ENCODE measurements at regions of chr12 and their contacts with region 1.

Region 1: GRCh38 chr12:13362260-13362841 is 165.8 kb downstream of the EMP1 start:
- DNase-seq: peak; percentile 82
- H3K4me3 ChIP-seq: no peak overlapping the region
- H3K27ac ChIP-seq: no peak overlapping the region
- H3K4me1 ChIP-seq: peaks cover 0 to 3% (median 0%) of the 10 kb centered on the region in 4 donors
- H3K27me3 ChIP-seq: no peaks in the 10 kb centered on the region
- CTCF ChIP-seq: peak; percentile 69 to 92 (median 84)
- EP300 ChIP-seq: no peak
- POLR2A ChIP-seq: no peak

Region 2: GRCh38 chr12:12845025-12845787 is 517.1 kb before region 1 on chr12:
- in situ Hi-C with region 1: no loop called
- intact Hi-C with region 1: loop called (anchors 5 kb)
- DNase-seq: no peak
- H3K4me3 ChIP-seq: no peak overlapping the region
- H3K27ac ChIP-seq: no peak overlapping the region
- H3K4me1 ChIP-seq: peaks cover 0 to 6% (median 0%) of the 10 kb centered on the region in 4 donors
- H3K27me3 ChIP-seq: no peaks in the 10 kb centered on the region
- CTCF ChIP-seq: no peak
- EP300 ChIP-seq: no peak
- POLR2A ChIP-seq: no peak

Region 3: DNA sequence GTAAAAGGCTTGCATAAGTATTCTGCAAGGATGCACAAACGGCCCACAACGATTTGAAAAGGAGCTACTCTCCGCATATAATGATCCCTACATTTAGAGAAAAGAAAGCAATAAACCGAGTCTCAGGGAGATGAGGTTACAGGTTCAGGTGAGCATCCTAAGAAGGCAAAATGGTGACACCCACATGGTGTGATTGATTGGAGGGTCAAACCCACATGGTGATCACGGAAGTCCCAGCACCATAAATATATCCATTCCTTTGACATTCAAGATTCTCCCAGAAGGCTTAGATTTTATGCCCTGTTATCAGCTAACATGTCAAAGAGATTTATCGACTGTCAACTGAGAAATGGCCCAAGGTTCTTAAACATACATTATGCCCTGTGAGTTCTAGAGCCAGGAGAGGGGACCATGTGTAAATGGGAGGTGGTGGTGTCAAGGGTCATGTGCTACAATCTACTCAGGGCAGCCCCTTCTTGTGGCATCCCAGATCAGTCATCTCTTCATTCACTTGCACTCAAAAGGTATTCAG is 116.4 kb after region 1 on chr12:
- in situ Hi-C with region 1: no loop called
- intact Hi-C with region 1: no loop called
- DNase-seq: no peak
- H3K4me3 ChIP-seq: no peak overlapping the region
- H3K27ac ChIP-seq: no peak overlapping the region
- H3K4me1 ChIP-seq: no peaks in the 10 kb centered on the region
- H3K27me3 ChIP-seq: no peaks in the 10 kb centered on the region
- CTCF ChIP-seq: no peak
- EP300 ChIP-seq: no peak
- POLR2A ChIP-seq: no peak

Region 4: DNA sequence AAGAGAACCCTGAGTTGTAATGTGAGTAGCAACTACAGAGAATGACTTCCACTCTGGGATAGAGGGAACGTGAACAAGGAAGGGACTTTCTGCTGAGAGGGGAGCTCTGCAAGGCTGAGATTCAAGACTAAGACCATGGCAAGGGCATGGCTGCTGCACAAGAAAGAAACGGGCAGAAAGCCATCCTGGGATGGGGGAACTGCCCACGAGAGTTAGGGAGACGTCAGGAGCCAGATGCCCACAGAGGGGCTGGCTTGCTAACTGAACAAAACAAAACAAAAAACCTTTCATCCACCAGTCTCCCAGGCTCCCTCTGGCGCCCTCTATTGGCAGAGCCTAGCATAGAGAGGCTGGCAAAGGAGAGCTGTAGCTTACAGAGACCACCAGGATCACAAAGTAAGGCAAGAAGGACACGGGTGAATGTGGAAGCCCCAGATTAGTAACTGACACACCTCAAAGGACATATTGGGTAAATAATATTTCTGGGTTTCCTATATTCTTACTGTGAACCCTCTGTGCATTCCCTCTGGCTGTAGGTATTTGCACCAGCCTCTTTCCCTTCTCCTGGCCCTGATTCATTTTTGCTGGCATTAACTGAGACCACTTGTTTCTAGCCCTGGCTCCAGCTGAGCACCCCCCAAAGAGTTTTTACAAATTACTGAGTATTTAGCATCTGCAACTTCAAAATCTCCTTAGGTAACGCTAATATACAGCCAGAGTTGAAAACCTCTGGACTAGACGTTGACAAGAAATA is 172.5 kb after region 1 on chr12:
- in situ Hi-C with region 1: loop called in 1 of 4 experiments (anchors 10 kb)
- intact Hi-C with region 1: no loop called
- DNase-seq: peak; percentile 68
- H3K4me3 ChIP-seq: no peak overlapping the region
- H3K27ac ChIP-seq: no peak overlapping the region
- H3K4me1 ChIP-seq: peaks cover 0 to 8% (median 0%) of the 10 kb centered on the region in 4 donors
- H3K27me3 ChIP-seq: no peaks in the 10 kb centered on the region
- CTCF ChIP-seq: peak; percentile 73 to 89 (median 76)
- EP300 ChIP-seq: no peak
- POLR2A ChIP-seq: no peak

Region 5: GRCh38 chr12:13661005-13661887 is 298.9 kb after region 1 on chr12:
- in situ Hi-C with region 1: no loop called
- intact Hi-C with region 1: loop called (anchors 5 kb)
- DNase-seq: peak; percentile 54
- H3K4me3 ChIP-seq: no peak overlapping the region
- H3K27ac ChIP-seq: no peak overlapping the region
- H3K4me1 ChIP-seq: peaks cover 0 to 7% (median 0%) of the 10 kb centered on the region in 4 donors
- H3K27me3 ChIP-seq: no peaks in the 10 kb centered on the region
- CTCF ChIP-seq: peak; percentile 79 to 88 (median 83)
- EP300 ChIP-seq: no peak
- POLR2A ChIP-seq: no peak

Measured in transverse colon (tissue), 4 donors.